AG04450 (cell line): ENCODE measurements at regions of chr7 and their contacts with region 1.

Region 1: DNA sequence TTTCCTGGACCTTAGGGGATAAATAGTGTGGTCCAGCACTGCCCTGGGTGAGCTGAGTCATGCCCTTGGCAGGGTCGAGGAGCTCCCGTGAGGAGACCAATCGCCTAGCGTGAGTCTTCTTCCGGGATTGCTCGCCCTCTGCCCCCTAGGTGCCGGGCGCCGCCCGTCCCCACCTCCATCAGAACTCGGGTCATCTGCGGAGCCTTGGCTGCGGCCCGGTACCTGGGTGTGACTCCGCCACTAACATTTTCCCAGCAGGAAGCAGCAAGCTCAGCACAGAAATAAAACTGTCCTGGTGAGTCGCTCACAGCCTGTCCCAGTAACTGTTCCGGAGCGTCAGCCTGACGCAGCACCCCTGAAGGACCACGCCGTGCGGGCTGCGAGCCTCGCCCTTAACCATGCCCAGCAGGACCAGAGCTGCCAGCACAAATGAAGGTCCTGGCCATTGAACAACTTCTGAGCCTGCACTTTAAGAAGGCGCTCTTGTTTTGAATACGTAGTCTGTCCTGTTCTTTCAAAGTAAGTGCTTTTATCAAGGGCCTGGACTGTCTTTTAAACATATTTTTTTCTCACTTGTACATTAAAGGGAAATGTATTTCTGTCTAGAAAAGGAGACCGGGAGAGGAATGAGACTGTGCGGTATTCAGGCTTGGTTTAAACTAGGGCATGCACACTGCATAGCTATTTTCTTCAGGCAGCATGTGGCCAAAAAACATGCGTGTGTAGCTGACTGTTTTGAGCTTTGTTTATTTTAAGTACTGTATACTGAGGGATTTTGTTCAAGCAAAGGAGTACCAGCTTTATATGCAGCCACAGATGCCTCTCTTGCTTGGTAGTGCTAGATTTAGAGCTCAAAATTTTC is 136.7 kb downstream of the HECW1 start:
- DNase-seq: peak; percentile 70
- H3K4me3 ChIP-seq: peak overlapping the region; percentile 55
- H3K27ac ChIP-seq: peak overlapping the region; percentile 97
- H3K27me3 ChIP-seq: no peaks in the 10 kb centered on the region
- CTCF ChIP-seq: no peak

Region 2: DNA sequence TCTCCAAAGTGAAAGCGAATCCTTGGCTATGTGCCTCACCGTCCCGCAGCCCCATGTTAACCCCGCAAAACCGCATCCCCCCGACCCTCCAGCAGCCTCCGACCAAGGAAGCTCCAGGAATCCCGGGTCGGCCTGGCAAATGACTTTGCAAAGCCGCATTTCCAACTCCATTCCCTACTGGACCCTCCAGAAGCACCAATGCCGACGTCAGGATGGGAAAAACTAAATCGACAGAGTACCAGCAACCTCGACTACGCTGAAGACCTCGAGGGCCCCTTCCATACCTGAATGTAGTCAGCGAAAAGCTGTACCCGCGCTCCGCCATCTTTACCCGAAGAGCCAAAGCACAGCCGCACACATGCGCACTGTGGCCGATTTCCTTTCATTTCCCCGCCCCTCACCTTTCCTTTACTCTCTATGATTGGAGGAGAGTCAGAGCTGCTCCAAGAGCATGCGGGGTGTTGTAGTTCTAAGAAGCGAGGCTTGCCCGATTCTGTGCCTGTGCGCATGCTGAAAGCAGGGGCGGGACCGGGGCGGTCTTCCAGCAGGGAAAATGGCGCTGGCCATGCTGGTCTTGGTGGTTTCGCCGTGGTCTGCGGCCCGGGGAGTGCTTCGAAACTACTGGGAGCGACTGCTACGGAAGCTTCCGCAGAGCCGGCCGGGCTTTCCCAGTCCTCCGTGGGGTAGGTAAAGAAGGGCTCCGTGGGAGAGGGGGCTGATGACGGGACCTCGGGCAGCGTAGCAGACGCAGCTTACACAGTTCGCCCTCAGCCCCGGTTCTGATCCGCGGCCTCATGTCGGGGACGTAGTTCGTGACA is 317.1 kb before region 1 on chr7 and contains the starts of genes MRPL32 and PSMA2:
- CTCF ChIA-PET with region 1: no interaction called
- POLR2A ChIA-PET with region 1: interaction called, 10 read pairs
- DNase-seq: peak; percentile 93
- H3K4me3 ChIP-seq: peak within 1 kb of the TSS; percentile 93
- H3K27ac ChIP-seq: peak within 1 kb of the TSS; percentile 76
- H3K27me3 ChIP-seq: no peaks in the 10 kb centered on the region
- CTCF ChIP-seq: no peak
- polyA plus RNA-seq, gene MRPL32: 51.6 and 68.5 TPM in 2 replicates
- polyA plus RNA-seq, gene PSMA2: 142 and 233 TPM in 2 replicates

Region 3: GRCh38 chr7:43192806-43193460 is 56.3 kb before region 1 on chr7:
- CTCF ChIA-PET with region 1: no interaction called
- POLR2A ChIA-PET with region 1: no interaction called
- DNase-seq: no peak
- H3K4me3 ChIP-seq: no peak overlapping the region
- H3K27ac ChIP-seq: no peak overlapping the region
- H3K27me3 ChIP-seq: no peaks in the 10 kb centered on the region
- CTCF ChIP-seq: no peak

Region 4: GRCh38 chr7:43289826-43290225 is 40.6 kb after region 1 on chr7:
- CTCF ChIA-PET with region 1: no interaction called
- POLR2A ChIA-PET with region 1: no interaction called
- DNase-seq: no peak
- H3K4me3 ChIP-seq: no peak overlapping the region
- H3K27ac ChIP-seq: no peak overlapping the region
- H3K27me3 ChIP-seq: no peaks in the 10 kb centered on the region
- CTCF ChIP-seq: no peak